ENCODE measurements at regions of chr7 and their contacts with region 1.

Region 1: GRCh38 chr7:24199978-24200377 is 84.0 kb upstream of the NPY start:
- DNase-seq: no peak
- ATAC-seq: peak; percentile 39
- H3K4me3 Mint-ChIP-seq: no peak overlapping the region
- H3K27ac Mint-ChIP-seq: no peak overlapping the region
- H3K4me1 Mint-ChIP-seq: peaks cover 6% of the 10 kb centered on the region
- H3K27me3 Mint-ChIP-seq: no peaks in the 10 kb centered on the region
- CTCF ChIP-seq: no peak

Region 2: DNA sequence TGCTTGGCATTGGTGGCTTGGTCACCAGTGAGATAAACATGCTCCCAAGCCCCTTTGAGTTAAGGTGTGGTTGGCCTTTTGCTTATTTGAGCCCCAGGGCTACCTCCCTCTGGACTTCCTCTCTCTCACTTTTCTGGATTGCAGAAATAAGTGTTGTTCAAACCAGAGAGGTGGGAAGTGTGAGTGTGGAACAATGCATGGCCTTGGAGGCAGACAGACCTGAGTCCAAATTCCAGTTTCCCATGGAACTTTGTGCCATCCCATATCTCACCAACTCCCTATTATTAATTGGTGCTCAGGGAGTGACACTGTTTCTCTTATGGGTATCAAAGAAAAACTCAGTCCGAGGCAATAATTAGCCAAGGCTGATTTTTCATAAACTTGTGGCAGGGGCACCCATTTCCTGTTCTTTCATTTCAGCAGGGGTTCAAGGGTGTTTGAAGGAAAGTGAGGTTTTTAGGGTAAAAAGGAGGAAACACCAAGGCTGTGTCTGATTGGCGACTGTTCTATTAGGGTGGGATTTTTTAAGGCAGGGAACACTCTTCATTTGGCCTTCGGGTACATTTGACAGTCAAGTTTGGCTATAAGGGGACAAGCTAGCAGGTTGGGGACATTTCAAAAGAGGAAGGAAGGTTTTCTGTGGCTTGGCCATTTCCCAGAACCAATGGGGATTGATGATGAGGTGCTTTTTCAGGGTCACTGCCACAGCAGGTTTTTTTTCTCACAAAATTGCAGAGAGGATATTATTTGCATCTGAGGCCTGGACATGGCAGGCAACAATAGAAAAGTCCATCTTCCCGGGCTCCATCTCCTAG is 64.8 kb before region 1 on chr7:
- CTCF ChIA-PET with region 1: no interaction called
- POLR2A ChIA-PET with region 1: no interaction called
- intact Hi-C with region 1: loop called (anchors 10 kb)
- DNase-seq: no peak
- ATAC-seq: no peak
- H3K4me3 Mint-ChIP-seq: no peak overlapping the region
- H3K27ac Mint-ChIP-seq: no peak overlapping the region
- H3K4me1 Mint-ChIP-seq: peaks cover 4% of the 10 kb centered on the region
- H3K27me3 Mint-ChIP-seq: peaks cover 15% of the 10 kb centered on the region
- CTCF ChIP-seq: no peak

Region 3: GRCh38 chr7:24152356-24152755 is 47.6 kb before region 1 on chr7:
- CTCF ChIA-PET with region 1: no interaction called
- POLR2A ChIA-PET with region 1: no interaction called
- intact Hi-C with region 1: no loop called
- DNase-seq: no peak
- ATAC-seq: no peak
- H3K4me3 Mint-ChIP-seq: no peak overlapping the region
- H3K27ac Mint-ChIP-seq: no peak overlapping the region
- H3K4me1 Mint-ChIP-seq: no peaks in the 10 kb centered on the region
- H3K27me3 Mint-ChIP-seq: peaks cover 3% of the 10 kb centered on the region
- CTCF ChIP-seq: no peak

Region 4: DNA sequence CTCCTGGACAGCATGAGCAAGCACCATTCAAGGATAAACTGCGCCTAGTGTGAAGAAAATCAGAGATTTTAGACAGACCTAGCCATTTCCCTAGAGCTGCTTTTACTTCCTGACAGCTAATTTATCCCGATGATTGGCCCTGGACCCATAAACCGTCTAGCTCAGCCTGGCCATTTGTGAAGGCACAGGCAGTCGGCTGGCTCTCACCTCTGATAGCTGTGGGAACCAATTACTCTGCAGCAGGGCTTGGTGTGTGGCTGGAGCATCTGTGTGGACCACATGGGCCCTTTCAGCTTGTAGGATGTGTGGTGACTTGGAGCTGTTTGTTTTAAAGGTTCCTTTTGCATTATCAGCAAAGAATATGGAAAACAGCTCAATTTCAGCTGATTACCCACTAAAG is 27.1 kb before region 1 on chr7:
- CTCF ChIA-PET with region 1: no interaction called
- POLR2A ChIA-PET with region 1: no interaction called
- intact Hi-C with region 1: no loop called
- DNase-seq: no peak
- ATAC-seq: no peak
- H3K4me3 Mint-ChIP-seq: no peak overlapping the region
- H3K27ac Mint-ChIP-seq: no peak overlapping the region
- H3K4me1 Mint-ChIP-seq: no peaks in the 10 kb centered on the region
- H3K27me3 Mint-ChIP-seq: peaks cover 3% of the 10 kb centered on the region
- CTCF ChIP-seq: no peak

Measured in activated CD8-positive, alpha-beta T cell treated with anti-CD3 and anti-CD28 coated beads for 36 hours (primary cell).